CD8-positive, alpha-beta T cell (primary cell): ENCODE measurements at regions of chr1 and their contacts with region 1.

Region 1: GRCh38 chr1:182845379-182845778 is 6.2 kb downstream of the DHX9 start:
- DNase-seq: no peak
- ATAC-seq: no peak
- H3K4me3 ChIP-seq: no peak overlapping the region
- H3K4me3 Mint-ChIP-seq: no peak overlapping the region
- H3K27ac ChIP-seq: no peak overlapping the region
- H3K27ac Mint-ChIP-seq: no peak overlapping the region
- H3K4me1 ChIP-seq: peaks cover 70% of the 10 kb centered on the region
- H3K4me1 Mint-ChIP-seq: peaks cover 90% of the 10 kb centered on the region
- H3K27me3 ChIP-seq: no peaks in the 10 kb centered on the region
- H3K27me3 Mint-ChIP-seq: no peaks in the 10 kb centered on the region
- CTCF ChIP-seq: no peak

Region 2: GRCh38 chr1:182861994-182862393 is 16.6 kb after region 1 on chr1:
- CTCF ChIA-PET with region 1: no interaction called
- POLR2A ChIA-PET with region 1: no interaction called
- intact Hi-C with region 1: loop called in 1 of 2 experiments (anchors 2 kb)
- DNase-seq: no peak
- ATAC-seq: no peak
- H3K4me3 ChIP-seq: no peak overlapping the region
- H3K4me3 Mint-ChIP-seq: no peak overlapping the region
- H3K27ac ChIP-seq: no peak overlapping the region
- H3K27ac Mint-ChIP-seq: no peak overlapping the region
- H3K4me1 ChIP-seq: no peaks in the 10 kb centered on the region
- H3K4me1 Mint-ChIP-seq: peaks cover 12% of the 10 kb centered on the region
- H3K27me3 ChIP-seq: no peaks in the 10 kb centered on the region
- H3K27me3 Mint-ChIP-seq: no peaks in the 10 kb centered on the region
- CTCF ChIP-seq: no peak

Region 3: GRCh38 chr1:182884872-182885271 is 39.5 kb after region 1 on chr1:
- CTCF ChIA-PET with region 1: interaction called, 3 read pairs
- POLR2A ChIA-PET with region 1: no interaction called
- intact Hi-C with region 1: loop called in 1 of 2 experiments (anchors 5 kb)
- DNase-seq: no peak
- ATAC-seq: no peak
- H3K4me3 ChIP-seq: no peak overlapping the region
- H3K4me3 Mint-ChIP-seq: no peak overlapping the region
- H3K27ac ChIP-seq: no peak overlapping the region
- H3K27ac Mint-ChIP-seq: no peak overlapping the region
- H3K4me1 ChIP-seq: peaks cover 6% of the 10 kb centered on the region
- H3K4me1 Mint-ChIP-seq: peaks cover 8% of the 10 kb centered on the region
- H3K27me3 ChIP-seq: no peaks in the 10 kb centered on the region
- H3K27me3 Mint-ChIP-seq: no peaks in the 10 kb centered on the region
- CTCF ChIP-seq: no peak

Region 4: GRCh38 chr1:183968386-183968785 is 1123.0 kb after region 1 on chr1:
- CTCF ChIA-PET with region 1: no interaction called
- POLR2A ChIA-PET with region 1: no interaction called
- intact Hi-C with region 1: no loop called
- DNase-seq: no peak
- ATAC-seq: no peak
- H3K4me3 ChIP-seq: no peak overlapping the region
- H3K4me3 Mint-ChIP-seq: no peak overlapping the region
- H3K27ac ChIP-seq: peak overlapping the region in 1 of 2 experiments; percentile 17
- H3K27ac Mint-ChIP-seq: no peak overlapping the region
- H3K4me1 ChIP-seq: no peaks in the 10 kb centered on the region
- H3K4me1 Mint-ChIP-seq: peaks cover 10% of the 10 kb centered on the region
- H3K27me3 ChIP-seq: no peaks in the 10 kb centered on the region
- H3K27me3 Mint-ChIP-seq: peaks cover 3% of the 10 kb centered on the region
- CTCF ChIP-seq: no peak